Heart left ventricle (tissue), 16 donors: ENCODE measurements at regions of chr12 and their contacts with region 1.

Region 1: DNA sequence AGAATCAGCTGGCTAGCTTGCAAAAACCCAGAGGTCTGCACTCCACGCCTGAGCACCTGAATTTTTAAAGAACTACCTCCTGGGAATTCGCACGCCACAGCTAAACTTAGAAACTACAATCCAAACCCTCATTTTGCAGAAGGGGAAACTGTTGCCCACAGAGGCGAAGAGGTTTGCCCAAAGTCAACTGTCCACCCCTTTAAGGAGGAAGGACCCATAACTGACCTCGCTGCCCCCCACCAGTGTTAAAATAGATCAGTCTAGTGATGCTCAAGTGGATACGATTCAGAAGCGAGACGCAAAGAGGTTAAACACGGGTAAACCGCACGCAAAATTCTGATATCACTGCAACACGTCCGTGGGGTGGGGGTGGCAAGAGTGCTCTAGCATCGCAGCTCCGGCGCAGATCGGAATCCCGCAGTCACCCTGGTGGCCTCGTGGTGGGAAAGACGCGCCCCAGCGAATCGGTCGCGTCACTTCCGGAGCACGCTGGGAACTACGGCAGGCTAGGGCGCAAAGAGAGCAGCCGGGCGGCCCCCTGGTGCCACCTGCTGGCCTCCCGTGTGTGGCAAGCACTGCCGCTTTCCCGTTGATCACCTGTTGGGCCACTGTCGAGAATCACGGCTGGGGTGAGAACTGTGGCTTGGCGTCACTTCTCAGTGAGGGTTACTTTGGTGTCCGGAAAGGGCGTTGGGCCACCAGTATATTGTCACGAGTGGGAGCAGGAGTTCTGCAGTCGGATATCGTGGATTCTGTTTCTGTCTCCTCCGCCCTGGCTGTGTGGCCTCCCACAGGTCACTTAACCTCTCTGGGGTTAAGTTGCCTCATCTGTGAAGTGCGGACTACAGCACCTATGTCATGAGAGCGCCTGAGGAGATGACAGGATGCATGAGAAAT is at the start of gene ALKBH2:
- DNase-seq: peak; percentile 92 to 96 (median 95)
- ATAC-seq: peak; percentile 57 to 78 (median 78)
- H3K4me3 ChIP-seq: peak within 1 kb of the TSS; percentile 4 to 69 (median 58)
- H3K27ac ChIP-seq: peak within 1 kb of the TSS in 11 of 12 donors; percentile 2 to 82 (median 53)
- H3K4me1 ChIP-seq: peaks cover 0 to 31% (median 24%) of the 10 kb centered on the region in 12 donors
- H3K27me3 ChIP-seq: no peaks in the 10 kb centered on the region
- CTCF ChIP-seq: peak; percentile 97 to 100 (median 99)
- POLR2A ChIP-seq: peak in 1 of 2 donors; percentile 37
- total RNA-seq, gene ALKBH2: 5.1 to 9.4 (median 7.1) TPM

Region 2: DNA sequence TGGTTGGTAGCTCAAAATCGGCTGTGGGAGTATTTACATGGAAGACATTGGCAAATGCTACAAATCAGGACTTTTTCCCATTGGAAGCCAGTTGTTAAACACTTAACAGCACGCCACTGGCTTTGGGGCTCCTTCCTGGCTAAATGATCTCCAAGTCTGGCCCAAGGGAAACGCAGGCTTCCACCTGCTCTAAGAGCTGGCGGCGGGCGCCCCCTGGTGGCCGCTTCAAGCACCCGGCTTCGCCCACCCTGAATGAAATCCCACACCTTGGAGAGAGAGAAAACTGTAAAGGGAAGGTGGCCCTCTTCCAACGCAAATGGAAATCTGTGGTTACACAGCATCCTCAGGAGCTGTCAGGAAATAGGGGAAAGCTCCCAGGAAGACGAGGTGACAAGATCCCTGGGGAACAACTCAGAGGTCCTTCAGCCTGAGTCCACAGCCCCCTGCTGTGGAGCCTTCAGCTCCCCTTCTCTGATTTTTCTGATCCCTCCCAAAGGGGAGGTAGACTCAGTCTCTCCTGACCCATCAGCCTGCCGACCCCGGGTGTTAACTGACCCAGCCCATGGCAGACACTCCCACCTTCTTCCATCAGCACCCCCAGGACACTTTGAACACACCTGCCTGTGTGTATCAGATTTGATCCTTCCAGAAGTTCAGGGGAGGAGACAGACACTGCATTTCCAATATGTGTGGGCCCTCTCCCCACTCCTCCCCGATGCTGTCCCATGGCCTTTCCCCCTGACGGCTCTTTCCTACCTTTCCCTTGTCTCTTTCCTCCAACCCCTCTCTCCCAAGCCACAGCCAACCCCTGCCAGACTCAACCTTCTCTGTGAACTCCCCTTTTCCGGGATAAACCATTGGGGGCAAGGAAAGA is 475.0 kb before region 1 on chr12:
- intact Hi-C with region 1: loop called in 1 of 10 experiments (anchors 5 kb)
- DNase-seq: peak; percentile 74 to 89 (median 80)
- ATAC-seq: peak; percentile 72 to 90 (median 80)
- H3K4me3 ChIP-seq: no peak overlapping the region
- H3K27ac ChIP-seq: peak overlapping the region in 1 of 12 donors; percentile 53
- H3K4me1 ChIP-seq: peaks cover 0 to 67% (median 13%) of the 10 kb centered on the region in 12 donors
- H3K27me3 ChIP-seq: no peaks in the 10 kb centered on the region
- CTCF ChIP-seq: peak; percentile 91 to 100 (median 98)
- POLR2A ChIP-seq: no peak

Region 3: DNA sequence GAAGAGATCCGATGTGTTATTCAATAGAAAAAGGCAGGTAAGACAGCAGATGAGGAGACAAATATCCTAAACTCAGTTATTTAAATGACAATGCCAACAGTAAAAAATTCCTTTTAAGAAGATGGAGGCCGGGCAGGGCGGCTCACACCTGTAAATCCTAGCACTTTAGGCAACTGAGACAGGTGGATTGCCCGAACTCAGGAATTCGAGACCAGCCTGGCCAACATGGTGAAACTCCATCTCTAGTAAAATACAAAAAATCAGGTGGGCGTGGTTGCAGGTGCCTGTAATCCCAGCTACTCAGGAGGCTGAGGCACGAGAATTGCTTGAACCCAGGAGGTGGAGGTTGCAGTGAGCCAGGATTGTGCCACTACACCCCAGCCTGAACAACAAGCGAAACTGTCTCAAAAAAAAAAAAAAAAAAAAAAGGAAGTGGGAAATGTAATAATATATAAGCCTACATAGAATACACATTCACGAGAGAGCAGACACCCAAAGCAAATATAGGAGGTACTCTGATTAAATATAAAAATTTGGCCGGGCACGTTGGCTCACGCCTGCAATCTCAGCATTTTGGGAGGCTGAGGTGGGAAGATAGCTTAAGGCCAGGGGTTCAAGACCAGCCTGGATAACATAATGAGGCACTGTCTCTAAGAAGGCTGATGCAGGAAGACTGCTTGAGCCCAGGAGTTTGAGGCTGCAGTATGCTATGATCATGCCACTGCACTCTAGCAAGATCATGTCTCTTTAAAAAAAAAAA is 380.9 kb before region 1 on chr12:
- intact Hi-C with region 1: no loop called
- DNase-seq: no peak
- ATAC-seq: peak in 1 of 4 donors; percentile 17
- H3K4me3 ChIP-seq: peak overlapping the region in 1 of 12 donors; percentile 0
- H3K27ac ChIP-seq: peak overlapping the region in 10 of 12 donors; percentile 3 to 61 (median 36)
- H3K4me1 ChIP-seq: peaks cover 0 to 88% (median 56%) of the 10 kb centered on the region in 12 donors
- H3K27me3 ChIP-seq: no peaks in the 10 kb centered on the region
- CTCF ChIP-seq: no peak
- POLR2A ChIP-seq: no peak

Region 4: GRCh38 chr12:108803428-108804105 is 289.7 kb before region 1 on chr12:
- intact Hi-C with region 1: loop called in 4 of 10 experiments (anchors 10 kb)
- DNase-seq: peak in 4 of 5 donors; percentile 78 to 82 (median 81)
- ATAC-seq: peak; percentile 69 to 79 (median 72)
- H3K4me3 ChIP-seq: peak overlapping the region in 4 of 12 donors; percentile 39 to 48 (median 40)
- H3K27ac ChIP-seq: peak overlapping the region; percentile 65 to 96 (median 88)
- H3K4me1 ChIP-seq: peaks cover 10 to 88% (median 59%) of the 10 kb centered on the region in 12 donors
- H3K27me3 ChIP-seq: no peaks in the 10 kb centered on the region
- CTCF ChIP-seq: peak; percentile 87 to 99 (median 97)
- POLR2A ChIP-seq: no peak

Region 5: DNA sequence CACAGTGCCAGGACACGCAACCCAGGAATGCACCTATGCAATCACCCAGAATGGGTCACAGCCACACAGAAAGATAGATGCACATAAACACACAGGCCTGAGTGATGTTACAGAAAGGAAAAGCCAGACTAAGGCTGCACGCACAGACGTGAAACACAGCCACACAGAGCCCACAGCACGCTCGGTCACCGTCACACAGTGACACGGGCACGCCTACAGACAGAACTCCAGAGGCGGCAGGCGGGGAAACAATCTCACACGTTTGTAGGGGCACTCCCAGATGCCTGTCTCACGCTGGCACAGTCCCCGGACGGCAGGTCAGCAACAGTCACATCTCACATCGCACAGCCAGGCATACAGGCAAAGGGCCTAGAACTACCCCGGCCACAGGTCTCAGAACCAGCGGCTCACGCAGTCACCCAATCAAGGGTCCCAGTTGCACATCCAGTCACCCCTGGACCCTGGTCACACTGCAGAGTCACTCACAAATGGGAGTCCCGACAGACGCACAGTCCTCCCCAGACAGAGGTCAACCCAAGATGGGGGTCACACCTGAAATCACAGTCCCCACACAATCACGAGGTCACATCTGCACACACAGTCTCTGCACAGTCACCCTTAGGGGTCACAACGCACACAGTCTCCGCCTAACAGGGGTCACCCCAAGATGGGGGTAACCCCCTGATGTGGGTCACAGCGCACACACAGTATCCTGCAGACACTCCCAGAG is 236.7 kb before region 1 on chr12:
- intact Hi-C with region 1: loop called in 1 of 10 experiments (anchors 10 kb)
- DNase-seq: peak; percentile 80 to 93 (median 86)
- ATAC-seq: peak; percentile 41 to 63 (median 60)
- H3K4me3 ChIP-seq: peak overlapping the region; percentile 62 to 98 (median 88)
- H3K27ac ChIP-seq: peak overlapping the region; percentile 86 to 99 (median 96)
- H3K4me1 ChIP-seq: peaks cover 12 to 82% (median 57%) of the 10 kb centered on the region in 12 donors
- H3K27me3 ChIP-seq: no peaks in the 10 kb centered on the region
- CTCF ChIP-seq: no peak
- POLR2A ChIP-seq: peak in 1 of 2 donors; percentile 44

Region 6: DNA sequence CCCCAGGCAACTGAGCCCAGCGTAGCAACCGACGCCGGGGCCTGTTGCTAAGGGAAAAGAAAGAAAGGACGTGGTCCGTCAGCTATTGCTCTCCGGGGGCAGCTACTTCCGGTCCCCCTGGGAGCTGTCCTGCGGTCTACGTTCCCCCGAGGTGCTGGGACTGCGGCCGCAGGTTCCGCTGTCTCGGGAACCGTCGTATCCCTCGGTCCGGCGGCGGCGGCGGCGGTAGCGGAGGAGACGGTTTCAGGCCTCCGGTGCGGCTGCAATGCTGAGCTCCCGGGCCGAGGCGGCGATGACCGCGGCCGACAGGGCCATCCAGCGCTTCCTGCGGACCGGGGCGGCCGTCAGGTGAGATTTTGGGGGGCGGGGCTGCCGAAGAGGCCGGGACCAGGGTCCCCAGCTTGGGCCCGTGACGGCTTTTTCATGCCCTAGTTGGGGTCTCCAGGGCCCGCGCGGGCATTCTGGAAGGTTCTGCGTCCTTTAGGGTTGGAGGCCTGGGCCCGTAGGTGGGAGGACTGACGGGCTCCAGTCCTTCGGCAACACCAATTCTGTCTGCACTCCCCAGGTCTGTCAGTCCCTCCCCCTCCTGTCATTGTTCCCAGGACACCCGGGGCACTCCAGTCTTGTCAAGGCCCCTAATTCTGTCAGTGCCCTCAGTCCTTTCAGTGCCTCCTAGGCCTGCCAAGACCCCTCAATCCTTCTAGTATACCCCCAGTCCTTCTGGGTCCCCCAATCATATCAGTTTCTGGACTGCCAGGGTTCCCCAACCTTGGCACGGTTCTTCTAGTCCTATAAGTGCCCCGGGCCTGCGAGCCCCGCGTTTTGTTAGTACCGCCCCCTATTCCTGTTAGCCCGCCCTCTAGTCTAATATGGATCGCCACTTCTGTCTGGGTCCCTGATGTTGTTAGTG is 40.6 kb before region 1 on chr12 and contains the start of gene USP30:
- intact Hi-C with region 1: loop called in 1 of 10 experiments (anchors 1 kb)
- DNase-seq: peak; percentile 84 to 92 (median 86)
- ATAC-seq: peak; percentile 91 to 98 (median 96)
- H3K4me3 ChIP-seq: peak within 1 kb of the TSS; percentile 60 to 97 (median 92)
- H3K27ac ChIP-seq: peak within 1 kb of the TSS; percentile 67 to 93 (median 90)
- H3K4me1 ChIP-seq: peaks cover 0 to 25% (median 17%) of the 10 kb centered on the region in 12 donors
- H3K27me3 ChIP-seq: no peaks in the 10 kb centered on the region
- CTCF ChIP-seq: no peak
- POLR2A ChIP-seq: no peak
- total RNA-seq, gene USP30: 9.8 to 29.9 (median 16.7) TPM